ENCODE measurements at regions of chr5 and their contacts with region 1.

Region 1: DNA sequence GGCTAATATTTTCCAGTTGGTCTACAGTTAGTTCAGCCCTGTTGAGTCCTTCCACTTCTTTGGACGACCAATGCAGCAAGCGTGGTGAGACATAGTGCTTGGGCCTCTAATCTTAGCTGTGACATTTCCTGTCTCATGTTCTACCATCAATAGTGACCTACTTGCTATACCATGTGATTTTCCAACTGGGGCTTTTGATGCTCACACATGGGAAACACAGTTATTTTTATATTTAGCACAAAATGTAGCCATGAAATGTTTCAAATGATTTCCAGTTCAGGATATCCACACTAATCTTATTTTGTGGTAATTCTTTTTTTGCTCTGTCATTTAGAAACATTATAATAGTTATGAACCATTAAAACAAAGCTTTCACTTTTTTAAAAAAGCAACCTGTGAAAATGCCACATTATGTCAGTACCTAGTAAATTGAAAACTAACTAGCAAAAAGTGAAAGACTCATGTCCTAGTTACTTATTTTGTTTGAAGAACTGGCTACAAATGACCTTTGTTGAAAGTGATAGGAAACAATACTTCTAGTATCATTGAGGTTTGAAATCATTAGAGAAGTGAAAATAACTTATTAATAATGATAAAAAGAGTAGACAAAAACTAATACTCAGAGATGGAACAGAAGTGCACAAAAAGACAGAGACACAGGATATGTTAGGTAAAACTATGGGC is 18.3 kb downstream of the MARCHF3 start:
- DNase-seq: no peak
- ATAC-seq: peak in 7 of 8 donors; percentile 51 to 86 (median 69)
- H3K4me3 ChIP-seq: no peak overlapping the region
- H3K27ac ChIP-seq: peak overlapping the region in 6 of 10 donors; percentile 16 to 64 (median 28)
- H3K4me1 ChIP-seq: peaks cover 0 to 77% (median 52%) of the 10 kb centered on the region in 9 donors
- H3K27me3 ChIP-seq: no peaks in the 10 kb centered on the region
- CTCF ChIP-seq: no peak

Region 2: DNA sequence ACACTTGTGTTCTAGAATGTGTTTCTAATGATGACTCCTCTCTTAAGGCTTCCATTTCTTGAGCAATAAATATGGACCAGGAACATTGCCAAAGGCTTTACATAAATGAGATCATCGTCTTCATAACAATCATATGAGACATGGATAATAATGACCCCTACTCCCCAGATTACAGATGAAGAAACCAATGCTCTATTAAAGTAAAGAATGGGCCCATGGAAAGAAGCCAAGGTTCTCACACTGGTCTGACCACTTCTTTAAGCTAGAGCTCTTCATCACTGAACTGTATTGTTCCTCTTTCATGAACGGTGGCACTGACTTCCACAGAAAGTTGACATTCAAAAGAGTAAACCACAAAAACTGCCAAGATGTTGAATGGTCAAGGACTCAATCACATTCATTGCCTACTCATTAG is 47.0 kb before region 1 on chr5:
- intact Hi-C with region 1: loop called in 1 of 10 experiments (anchors 5 kb)
- DNase-seq: no peak
- ATAC-seq: no peak
- H3K4me3 ChIP-seq: no peak overlapping the region
- H3K27ac ChIP-seq: peak overlapping the region in 1 of 10 donors; percentile 32
- H3K4me1 ChIP-seq: peaks cover 0 to 53% (median 8%) of the 10 kb centered on the region in 9 donors
- H3K27me3 ChIP-seq: no peaks in the 10 kb centered on the region
- CTCF ChIP-seq: no peak